Activated naive CD4-positive, alpha-beta T cell treated with anti-CD3 and anti-CD28 coated beads for 36 hours (primary cell): ENCODE measurements at regions of chr17 and their contacts with region 1.

Region 1: GRCh38 chr17:69141431-69142174 is at the start of gene ABCA6:
- DNase-seq: no peak
- H3K4me3 Mint-ChIP-seq: no peak within 1 kb of the TSS
- H3K27ac Mint-ChIP-seq: no peak within 1 kb of the TSS
- H3K4me1 Mint-ChIP-seq: no peaks in the 10 kb centered on the region
- H3K27me3 Mint-ChIP-seq: peaks cover 7% of the 10 kb centered on the region
- total RNA-seq, gene ABCA6: not detected

Region 2: GRCh38 chr17:69084911-69085310 is 56.7 kb before region 1 on chr17:
- CTCF ChIA-PET with region 1: no interaction called
- intact Hi-C with region 1: loop called (anchors 10 kb)
- DNase-seq: no peak
- H3K4me3 Mint-ChIP-seq: no peak overlapping the region
- H3K27ac Mint-ChIP-seq: no peak overlapping the region
- H3K4me1 Mint-ChIP-seq: no peaks in the 10 kb centered on the region
- H3K27me3 Mint-ChIP-seq: no peaks in the 10 kb centered on the region